Mucosa of descending colon (tissue), 3 donors: ENCODE measurements at regions of chr3 and their contacts with region 1.

Region 1: DNA sequence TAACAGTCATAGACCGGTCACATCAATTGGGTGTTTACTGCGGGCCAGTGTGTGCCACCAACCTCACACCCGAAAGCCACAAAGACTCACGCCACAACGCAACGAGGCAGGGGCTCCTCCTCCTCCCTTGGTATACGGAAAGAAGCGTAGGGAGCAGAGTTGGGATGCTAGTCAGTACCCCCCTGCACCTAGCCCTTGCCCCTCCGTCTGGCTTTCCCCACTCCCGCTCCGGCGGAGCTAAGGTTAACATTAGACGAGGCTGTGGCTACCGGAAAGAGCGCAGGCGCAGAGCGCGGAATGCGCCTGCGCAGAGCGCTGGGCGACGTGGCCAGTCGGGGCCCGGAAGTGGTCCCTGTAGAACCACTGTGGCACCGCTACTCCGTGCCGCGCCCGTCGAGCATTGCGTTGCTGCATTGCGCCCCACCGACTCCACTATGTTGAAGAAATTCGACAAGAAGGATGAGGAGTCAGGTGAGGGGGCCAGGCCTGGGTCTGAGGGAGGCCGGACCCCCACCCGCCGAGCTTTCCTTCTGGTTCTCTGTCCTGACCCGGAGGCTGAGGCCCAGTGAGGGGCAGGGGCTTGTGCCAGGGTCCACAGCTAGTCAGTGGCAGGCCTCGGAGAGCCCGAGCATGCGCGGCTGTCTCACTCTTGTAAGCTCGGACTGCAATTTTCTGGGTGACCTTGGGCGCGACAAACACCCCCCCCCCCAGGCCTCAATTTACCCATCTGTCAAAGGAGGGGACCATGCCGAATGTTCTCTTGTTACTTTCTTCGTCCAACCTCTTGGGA is at the start of gene COPG1:
- DNase-seq: peak; percentile 91 to 94 (median 92)
- ATAC-seq: peak; percentile 92
- H3K4me3 ChIP-seq: peak within 1 kb of the TSS; percentile 99
- H3K4me1 ChIP-seq: peaks cover 22% of the 10 kb centered on the region
- CTCF ChIP-seq: no peak
- total RNA-seq, gene COPG1: 157 to 274 (median 228) TPM

Region 2: DNA sequence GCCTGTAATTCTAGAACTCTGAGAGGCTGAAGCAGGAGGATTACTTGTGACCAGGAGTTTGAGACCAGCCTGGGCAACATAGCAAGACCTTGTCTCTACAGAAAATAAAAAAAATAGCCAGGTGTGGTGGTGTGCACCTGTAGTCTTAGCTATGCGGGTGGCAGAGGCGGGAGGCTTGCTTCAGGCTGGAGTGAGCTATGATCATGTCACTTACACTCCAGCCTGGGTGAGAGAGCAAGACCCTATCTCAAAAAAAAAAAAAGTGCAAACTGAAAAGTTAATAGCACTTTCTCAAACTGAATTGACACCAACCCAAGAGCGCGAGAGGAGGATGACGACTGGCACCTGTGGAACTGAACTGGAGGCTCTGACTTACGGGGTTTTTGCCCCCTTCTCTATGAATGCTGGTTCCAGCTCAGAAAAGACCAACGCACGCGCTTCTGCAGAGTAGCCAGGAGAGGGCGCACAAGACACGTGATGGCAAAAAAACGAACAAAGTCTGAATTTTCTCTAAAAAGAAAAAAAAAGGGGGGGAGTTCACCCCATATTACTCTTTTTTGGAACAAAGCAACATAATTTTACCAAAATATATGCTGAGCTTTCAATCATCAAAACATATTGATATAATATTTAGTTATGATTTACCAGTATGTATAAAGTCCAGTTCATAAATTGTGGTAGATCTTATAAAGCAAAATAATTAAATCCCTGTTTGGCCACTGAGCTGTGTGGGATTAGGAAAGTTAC is 279.3 kb before region 1 on chr3:
- intact Hi-C with region 1: loop called in 1 of 2 experiments (anchors 10 kb)
- DNase-seq: peak in 2 of 3 donors; percentile 50 to 55
- ATAC-seq: peak; percentile 62
- H3K4me3 ChIP-seq: no peak overlapping the region
- H3K4me1 ChIP-seq: no peaks in the 10 kb centered on the region
- CTCF ChIP-seq: peak; percentile 81

Region 3: GRCh38 chr3:129058441-129059200 is 190.8 kb before region 1 on chr3:
- intact Hi-C with region 1: loop called in 1 of 2 experiments (anchors 10 kb)
- DNase-seq: peak; percentile 58 to 75 (median 58)
- ATAC-seq: peak; percentile 41
- H3K4me3 ChIP-seq: no peak overlapping the region
- H3K4me1 ChIP-seq: peaks cover 37% of the 10 kb centered on the region
- CTCF ChIP-seq: no peak

Region 4: GRCh38 chr3:129144786-129145185 is 104.7 kb before region 1 on chr3:
- intact Hi-C with region 1: no loop called
- DNase-seq: no peak
- ATAC-seq: no peak
- H3K4me3 ChIP-seq: no peak overlapping the region
- H3K4me1 ChIP-seq: no peaks in the 10 kb centered on the region
- CTCF ChIP-seq: no peak

Region 5: GRCh38 chr3:129183569-129184395 is 65.7 kb before region 1 on chr3 and contains the start of gene CNBP:
- intact Hi-C with region 1: loop called in 1 of 2 experiments (anchors 5 kb)
- DNase-seq: peak; percentile 93 to 96 (median 96)
- ATAC-seq: peak; percentile 96
- H3K4me3 ChIP-seq: peak within 1 kb of the TSS; percentile 98
- H3K4me1 ChIP-seq: peaks cover 47% of the 10 kb centered on the region
- CTCF ChIP-seq: no peak
- total RNA-seq, gene CNBP: 223 to 353 (median 234) TPM